PC-9 (cell line): ENCODE measurements at regions of chr7 and their contacts with region 1.

Region 1: DNA sequence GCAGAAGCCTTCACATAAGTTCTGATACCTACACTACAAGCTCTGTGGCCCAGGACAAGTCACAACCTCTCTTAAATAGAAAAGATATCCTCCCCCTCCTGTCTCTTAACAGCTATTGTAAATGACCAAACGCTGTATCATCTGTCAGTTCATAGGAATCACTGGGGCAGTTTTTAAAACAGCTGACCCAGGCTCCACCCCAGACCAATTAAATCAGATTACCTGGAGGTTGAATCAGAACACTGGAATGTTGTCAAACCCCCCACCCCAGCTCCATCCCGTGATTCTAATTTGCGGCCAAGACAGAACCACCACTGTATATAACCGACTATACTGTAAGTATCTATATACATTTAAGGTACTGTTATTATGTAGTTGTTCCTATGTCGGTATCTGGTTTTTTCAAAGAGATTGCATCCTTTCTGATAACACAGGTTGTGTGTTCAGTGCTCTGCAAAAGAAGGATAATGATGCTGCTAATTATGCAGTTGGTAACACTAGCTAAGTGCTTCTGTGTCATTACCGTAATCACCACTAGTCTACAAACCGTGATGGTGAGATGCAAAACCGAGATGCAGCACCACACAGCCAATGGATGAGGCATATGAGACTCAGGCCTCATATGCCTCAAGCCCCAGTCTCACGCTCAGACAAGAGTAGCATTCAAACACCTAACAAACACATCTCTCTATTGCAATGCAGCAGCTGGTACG is 47.4 kb downstream of the TNS3 start:
- DNase-seq: peak; percentile 76 to 89
- H3K4me3 ChIP-seq: no peak overlapping the region
- H3K27ac ChIP-seq: peak overlapping the region; percentile 52
- H3K4me1 ChIP-seq: peaks cover 84% of the 10 kb centered on the region
- H3K27me3 ChIP-seq: no peaks in the 10 kb centered on the region
- CTCF ChIP-seq: peak; percentile 62

Region 2: GRCh38 chr7:47482013-47482875 is 52.2 kb before region 1 on chr7:
- CTCF ChIA-PET with region 1: interaction called, 3 read pairs
- POLR2A ChIA-PET with region 1: no interaction called
- intact Hi-C with region 1: loop called (anchors 1 kb)
- DNase-seq: peak; percentile 82 to 99
- H3K4me3 ChIP-seq: peak overlapping the region; percentile 15; the same call in 1 of the 2 replicates
- H3K27ac ChIP-seq: peak overlapping the region; percentile 90
- H3K4me1 ChIP-seq: peaks cover 85% of the 10 kb centered on the region
- H3K27me3 ChIP-seq: no peaks in the 10 kb centered on the region
- CTCF ChIP-seq: no peak

Region 3: GRCh38 chr7:47557169-47557985 is 22.9 kb after region 1 on chr7:
- CTCF ChIA-PET with region 1: no interaction called
- POLR2A ChIA-PET with region 1: interaction called, 34 read pairs
- intact Hi-C with region 1: no loop called
- DNase-seq: no peak
- H3K4me3 ChIP-seq: no peak overlapping the region
- H3K27ac ChIP-seq: no peak overlapping the region
- H3K4me1 ChIP-seq: peaks cover 30% of the 10 kb centered on the region
- H3K27me3 ChIP-seq: no peaks in the 10 kb centered on the region
- CTCF ChIP-seq: no peak